Tibial artery (tissue), 4 donors: ENCODE measurements at regions of chr19 and their contacts with region 1.

Region 1: DNA sequence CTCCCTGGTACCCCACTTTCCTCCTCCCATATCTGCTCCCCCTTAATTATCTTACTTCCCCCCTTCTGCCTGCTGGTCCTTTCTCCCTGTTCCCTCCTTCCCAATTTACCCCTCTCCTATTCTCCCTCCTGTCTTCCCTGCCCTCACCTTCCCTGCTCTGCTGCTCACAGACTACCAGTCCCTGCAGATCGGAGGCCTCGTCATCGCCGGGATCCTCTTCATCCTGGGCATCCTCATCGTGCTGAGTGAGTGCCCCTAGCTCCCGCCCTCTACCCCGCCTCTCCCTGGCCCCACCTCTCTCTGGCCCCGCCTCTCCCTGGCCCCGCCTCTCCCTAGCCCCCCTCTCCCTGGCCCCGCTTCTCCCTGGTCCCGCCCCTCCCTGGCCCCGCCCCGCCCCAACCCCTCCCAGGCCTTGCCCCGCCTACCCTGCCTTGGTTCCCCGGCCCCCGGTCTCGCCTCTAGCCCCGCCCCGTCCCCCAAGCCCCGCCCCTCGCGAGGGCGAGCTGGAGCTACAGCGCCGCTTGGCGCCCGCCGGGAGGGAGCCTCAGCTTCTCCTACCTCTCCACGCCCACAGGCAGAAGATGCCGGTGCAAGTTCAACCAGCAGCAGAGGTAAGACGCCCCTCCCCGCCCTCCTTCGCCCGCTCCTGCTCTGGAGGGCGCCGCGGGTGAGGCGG is 2.0 kb upstream of the FXYD7 start:
- DNase-seq: peak; percentile 94 to 97
- H3K4me3 ChIP-seq: peak overlapping the region; percentile 64 to 66
- H3K27ac ChIP-seq: peak overlapping the region; percentile 91 to 96
- H3K4me1 ChIP-seq: peaks cover 0 to 55% (median 37%) of the 10 kb centered on the region in 4 donors
- H3K27me3 ChIP-seq: no peaks in the 10 kb centered on the region
- CTCF ChIP-seq: peak in 1 of 2 experiments; percentile 55

Region 2: GRCh38 chr19:34938886-34939285 is 202.2 kb before region 1 on chr19:
- intact Hi-C with region 1: no loop called
- DNase-seq: no peak
- H3K4me3 ChIP-seq: no peak overlapping the region
- H3K27ac ChIP-seq: no peak overlapping the region
- H3K4me1 ChIP-seq: no peaks in the 10 kb centered on the region
- H3K27me3 ChIP-seq: no peaks in the 10 kb centered on the region
- CTCF ChIP-seq: no peak

Region 3: GRCh38 chr19:35066691-35067563 is 74.2 kb before region 1 on chr19:
- intact Hi-C with region 1: loop called (anchors 5 kb)
- DNase-seq: peak; percentile 88 to 89
- H3K4me3 ChIP-seq: no peak overlapping the region
- H3K27ac ChIP-seq: no peak overlapping the region
- H3K4me1 ChIP-seq: no peaks in the 10 kb centered on the region
- H3K27me3 ChIP-seq: peaks cover 0 to 19% of the 10 kb centered on the region in 2 donors
- CTCF ChIP-seq: peak; percentile 83 to 85

Region 4: DNA sequence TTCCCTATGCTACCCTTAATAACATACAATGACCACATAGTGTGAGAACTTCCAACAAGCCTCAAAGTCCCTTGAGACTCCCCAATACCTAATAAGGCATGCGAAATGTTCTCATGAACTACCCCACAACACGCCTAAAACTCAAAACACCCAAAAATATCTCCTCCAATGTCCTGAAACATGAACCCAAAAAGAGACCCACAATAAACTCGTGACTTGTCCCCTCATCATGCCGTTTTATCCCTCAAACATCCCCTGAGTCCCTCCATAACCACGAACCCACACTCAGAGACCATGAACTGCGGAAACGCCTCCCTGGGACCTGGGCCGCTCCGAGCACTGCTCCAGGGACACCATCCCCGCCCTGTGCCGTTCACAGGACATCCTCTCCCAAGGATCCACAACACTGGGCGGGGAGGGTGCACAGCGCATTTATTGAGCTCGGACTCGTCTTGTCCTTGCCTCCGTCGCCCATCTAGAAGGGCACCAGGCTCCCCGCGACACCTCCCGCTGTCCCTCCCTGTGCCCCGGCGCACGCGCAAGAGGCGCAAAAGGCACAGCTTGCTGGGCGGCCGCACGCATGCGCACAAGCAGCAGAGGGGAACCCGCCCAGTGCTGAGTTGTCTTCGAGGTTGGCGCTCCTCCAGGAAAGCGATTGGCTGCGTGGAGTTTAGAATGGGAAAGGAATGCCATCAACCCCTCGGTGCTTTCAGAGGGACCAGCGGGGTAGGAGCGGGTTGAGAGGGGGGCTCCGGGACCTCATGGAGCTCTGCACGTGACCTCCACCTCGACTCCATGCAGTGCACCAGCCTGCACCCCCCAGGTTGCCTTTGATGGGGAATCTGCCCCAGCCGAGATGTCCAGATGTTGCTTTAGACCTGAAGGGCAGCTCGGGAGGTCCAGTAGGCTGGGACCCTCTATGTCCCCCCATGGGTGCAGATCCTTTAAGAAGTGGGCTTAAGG is 16.7 kb before region 1 on chr19:
- intact Hi-C with region 1: loop called (anchors 2 kb)
- DNase-seq: peak; percentile 96 to 97
- H3K4me3 ChIP-seq: peak overlapping the region; percentile 58 to 61
- H3K27ac ChIP-seq: peak overlapping the region; percentile 90 to 95
- H3K4me1 ChIP-seq: peaks cover 14 to 67% (median 33%) of the 10 kb centered on the region in 4 donors
- H3K27me3 ChIP-seq: no peaks in the 10 kb centered on the region
- CTCF ChIP-seq: peak in 1 of 2 experiments; percentile 5

Region 5: DNA sequence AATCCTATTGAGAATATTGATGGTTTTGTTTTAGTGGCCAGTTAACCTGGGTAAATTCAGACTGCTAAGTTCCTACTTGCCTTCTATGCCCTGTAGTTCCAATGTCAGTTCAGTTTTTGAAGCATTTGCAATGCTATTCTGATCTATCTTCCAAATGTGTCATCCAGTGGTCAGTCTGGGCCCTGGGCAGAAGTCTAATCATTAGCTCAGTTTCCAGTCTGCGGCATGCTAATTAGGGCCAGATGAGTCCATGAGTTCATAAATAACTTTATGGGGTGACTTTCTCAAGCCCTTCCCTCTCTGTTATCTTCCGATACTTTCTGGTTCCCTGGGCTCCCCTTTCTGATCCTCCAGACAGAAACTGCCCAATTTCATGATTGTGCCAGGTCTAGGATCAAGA is 54.7 kb after region 1 on chr19:
- intact Hi-C with region 1: no loop called
- DNase-seq: no peak
- H3K4me3 ChIP-seq: no peak overlapping the region
- H3K27ac ChIP-seq: no peak overlapping the region
- H3K4me1 ChIP-seq: no peaks in the 10 kb centered on the region
- H3K27me3 ChIP-seq: peaks cover 0 to 8% of the 10 kb centered on the region in 2 donors
- CTCF ChIP-seq: no peak